GM13977 (cell line): ENCODE measurements at regions of chr1 and their contacts with region 1.

Region 1: DNA sequence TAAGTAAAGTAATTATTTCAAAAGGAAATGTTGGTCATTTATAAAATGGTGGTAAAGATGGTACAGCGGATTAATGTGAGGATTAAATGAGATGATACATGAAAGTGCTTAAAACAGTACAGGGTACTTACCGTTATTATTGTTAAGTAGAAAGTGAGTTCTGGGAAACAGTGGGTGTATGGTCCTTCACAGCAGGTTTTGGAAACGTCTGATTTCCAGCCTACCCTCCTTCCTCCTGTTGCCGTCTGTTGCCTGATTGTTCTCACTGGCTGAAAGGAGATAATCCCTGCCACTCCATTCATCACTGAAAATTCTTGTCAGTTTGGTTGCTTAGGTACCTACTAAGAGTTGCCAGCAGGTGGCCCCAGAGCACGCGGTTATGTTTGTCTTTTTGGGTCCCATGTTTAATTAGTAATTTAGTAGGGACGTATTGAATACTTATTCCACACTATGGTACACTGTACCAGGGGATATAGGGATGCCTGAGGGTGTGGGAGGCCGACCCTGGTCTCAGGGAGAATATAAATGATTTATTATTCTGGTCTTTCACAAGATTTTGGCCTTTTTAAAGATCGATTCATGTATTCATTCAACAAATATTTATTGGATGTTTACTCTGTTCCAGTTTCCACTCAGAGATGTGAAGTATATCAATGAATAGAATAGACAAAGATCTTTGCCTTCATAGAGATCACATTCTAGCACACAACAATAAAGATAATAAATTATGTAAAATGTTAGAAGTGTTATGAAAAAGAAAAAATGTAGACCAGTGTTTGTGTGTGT is 30.8 kb upstream of the RPTN start:
- DNase-seq: peak; percentile 79
- CTCF ChIP-seq: peak; percentile 82

Region 2: GRCh38 chr1:152137215-152137614 is 52.6 kb before region 1 on chr1:
- in situ Hi-C with region 1: loop called (anchors 10 kb)
- DNase-seq: no peak
- CTCF ChIP-seq: no peak

Region 3: GRCh38 chr1:152459596-152460528 is 270.0 kb after region 1 on chr1:
- in situ Hi-C with region 1: loop called (anchors 5 kb)
- DNase-seq: peak; percentile 76
- CTCF ChIP-seq: peak; percentile 80